ENCODE measurements at regions of chrX and their contacts with region 1.

Region 1: DNA sequence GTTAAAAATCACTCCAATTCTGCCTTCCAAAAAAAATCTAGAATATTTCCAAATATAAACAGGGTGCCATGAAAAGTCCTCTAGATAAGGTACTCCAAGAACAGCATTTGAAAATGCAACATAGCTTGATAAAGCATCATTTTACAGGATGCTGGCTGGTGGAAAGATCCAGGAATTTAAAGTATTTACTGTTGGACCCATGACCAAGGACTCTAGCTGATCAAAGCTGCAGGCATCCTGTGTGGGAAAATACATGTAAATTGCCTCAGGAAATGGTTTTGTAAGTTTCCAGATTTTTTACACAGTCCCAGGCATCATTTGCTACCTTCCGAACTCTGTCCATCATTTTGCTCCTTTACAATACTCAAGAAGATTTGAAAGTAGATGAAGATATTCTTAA is 164.4 kb downstream of the GRIA3 start:
- DNase-seq: no peak
- ATAC-seq: no peak
- H3K4me3 ChIP-seq: no peak overlapping the region
- H3K27ac ChIP-seq: no peak overlapping the region
- H3K4me1 ChIP-seq: no peaks in the 10 kb centered on the region
- H3K27me3 ChIP-seq: no peaks in the 10 kb centered on the region
- CTCF ChIP-seq: no peak
- EP300 ChIP-seq: no peak
- POLR2A ChIP-seq: no peak
- RAD21 ChIP-seq: no peak

Region 2: GRCh38 chrX:123206176-123206575 is 142.3 kb before region 1 on chrX:
- CTCF ChIA-PET with region 1: no interaction called
- POLR2A ChIA-PET with region 1: no interaction called
- RAD21 ChIA-PET with region 1: no interaction called
- SMC1A ChIA-PET with region 1: no interaction called
- in situ Hi-C with region 1: no loop called
- intact Hi-C with region 1: no loop called
- DNase-seq: no peak
- ATAC-seq: no peak
- H3K4me3 ChIP-seq: no peak overlapping the region
- H3K27ac ChIP-seq: no peak overlapping the region
- H3K4me1 ChIP-seq: no peaks in the 10 kb centered on the region
- H3K27me3 ChIP-seq: no peaks in the 10 kb centered on the region
- CTCF ChIP-seq: no peak
- EP300 ChIP-seq: no peak
- POLR2A ChIP-seq: no peak
- RAD21 ChIP-seq: no peak

Region 3: DNA sequence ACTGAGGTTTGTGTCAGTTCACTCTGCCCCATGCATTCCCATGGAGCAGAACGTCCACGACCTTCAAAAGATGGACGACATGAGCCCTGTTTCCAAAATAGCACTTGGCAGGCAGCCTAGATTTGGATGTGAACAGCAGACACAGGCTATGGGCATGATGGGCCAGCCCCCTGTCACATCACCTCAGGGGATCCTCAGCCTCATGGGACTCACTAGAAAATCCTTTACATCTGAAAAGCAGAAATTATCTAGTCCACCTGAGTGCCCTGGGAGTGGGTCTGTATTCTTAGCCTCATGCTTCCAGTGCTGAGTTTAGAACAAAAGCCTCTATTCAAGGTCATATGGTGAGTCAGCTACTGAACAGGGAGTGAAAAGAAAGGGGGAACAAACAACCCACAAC is 128.6 kb before region 1 on chrX:
- CTCF ChIA-PET with region 1: no interaction called
- POLR2A ChIA-PET with region 1: no interaction called
- RAD21 ChIA-PET with region 1: no interaction called
- SMC1A ChIA-PET with region 1: no interaction called
- in situ Hi-C with region 1: no loop called
- intact Hi-C with region 1: no loop called
- DNase-seq: no peak
- ATAC-seq: no peak
- H3K4me3 ChIP-seq: no peak overlapping the region
- H3K27ac ChIP-seq: no peak overlapping the region
- H3K4me1 ChIP-seq: no peaks in the 10 kb centered on the region
- H3K27me3 ChIP-seq: no peaks in the 10 kb centered on the region
- CTCF ChIP-seq: no peak
- EP300 ChIP-seq: no peak
- POLR2A ChIP-seq: no peak
- RAD21 ChIP-seq: no peak

Region 4: GRCh38 chrX:123324625-123325024 is 23.8 kb before region 1 on chrX:
- CTCF ChIA-PET with region 1: interaction called, 16 read pairs
- POLR2A ChIA-PET with region 1: interaction called, 3 read pairs
- RAD21 ChIA-PET with region 1: interaction called, 5 read pairs
- SMC1A ChIA-PET with region 1: interaction called, 51 read pairs
- in situ Hi-C with region 1: no loop called
- intact Hi-C with region 1: no loop called
- DNase-seq: no peak
- ATAC-seq: peak; percentile 76
- H3K4me3 ChIP-seq: no peak overlapping the region
- H3K27ac ChIP-seq: no peak overlapping the region
- H3K4me1 ChIP-seq: no peaks in the 10 kb centered on the region
- H3K27me3 ChIP-seq: no peaks in the 10 kb centered on the region
- CTCF ChIP-seq: no peak
- EP300 ChIP-seq: no peak
- POLR2A ChIP-seq: no peak
- RAD21 ChIP-seq: no peak

Region 5: DNA sequence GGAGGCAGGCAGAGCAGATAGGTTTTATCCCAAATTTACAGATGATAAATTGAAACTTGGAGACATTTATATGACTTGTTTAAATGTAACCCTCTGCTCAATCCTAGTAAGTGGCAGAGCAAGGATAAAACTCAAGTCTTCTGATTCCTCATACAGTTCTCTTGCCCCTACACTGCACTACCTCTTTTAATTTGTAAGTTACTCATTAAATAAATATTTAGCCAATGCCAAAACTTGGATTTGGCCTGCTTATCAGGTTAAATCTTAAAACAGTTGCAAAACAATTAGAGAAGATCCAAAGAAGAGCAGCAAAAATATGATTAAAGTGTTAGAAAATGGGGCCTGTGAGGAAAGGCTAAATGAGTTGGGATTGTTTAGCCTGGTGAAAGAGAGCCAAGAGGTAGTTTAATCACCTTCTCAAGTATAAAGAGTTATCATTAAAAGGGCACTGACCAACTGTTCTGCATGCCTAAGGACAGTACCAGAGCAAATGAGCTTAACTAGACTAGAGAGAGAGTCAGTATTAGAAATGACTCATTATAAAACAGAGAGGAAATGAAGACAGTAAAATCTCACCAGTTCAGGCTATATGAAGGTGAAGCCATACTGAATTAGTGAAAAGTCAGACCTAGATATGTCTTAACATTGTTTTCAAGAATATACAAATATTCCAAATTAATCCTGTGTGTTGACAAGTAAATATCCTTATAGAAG is 18.1 kb before region 1 on chrX:
- CTCF ChIA-PET with region 1: interaction called, 16 read pairs
- POLR2A ChIA-PET with region 1: interaction called, 19 read pairs
- RAD21 ChIA-PET with region 1: interaction called, 16 read pairs
- SMC1A ChIA-PET with region 1: interaction called, 51 read pairs
- in situ Hi-C with region 1: no loop called
- intact Hi-C with region 1: no loop called
- DNase-seq: no peak
- ATAC-seq: peak; percentile 97
- H3K4me3 ChIP-seq: no peak overlapping the region
- H3K27ac ChIP-seq: no peak overlapping the region
- H3K4me1 ChIP-seq: peaks cover 6% of the 10 kb centered on the region
- H3K27me3 ChIP-seq: no peaks in the 10 kb centered on the region
- CTCF ChIP-seq: no peak
- EP300 ChIP-seq: no peak
- POLR2A ChIP-seq: no peak
- RAD21 ChIP-seq: no peak